ENCODE measurements at regions of chr6 and their contacts with region 1.

Region 1: GRCh38 chr6:89432875-89433251 is at the start of gene ANKRD6:
- DNase-seq: peak; percentile 91
- ATAC-seq: peak; percentile 98
- total RNA-seq, gene ANKRD6: 17.0 TPM

Region 2: GRCh38 chr6:89400912-89401399 is 31.9 kb before region 1 on chr6:
- intact Hi-C with region 1: no loop called
- DNase-seq: no peak
- ATAC-seq: no peak

Region 3: GRCh38 chr6:89483111-89483720 is 50.4 kb after region 1 on chr6:
- intact Hi-C with region 1: loop called (anchors 5 kb)
- DNase-seq: peak; percentile 45
- ATAC-seq: peak; percentile 86

Region 4: DNA sequence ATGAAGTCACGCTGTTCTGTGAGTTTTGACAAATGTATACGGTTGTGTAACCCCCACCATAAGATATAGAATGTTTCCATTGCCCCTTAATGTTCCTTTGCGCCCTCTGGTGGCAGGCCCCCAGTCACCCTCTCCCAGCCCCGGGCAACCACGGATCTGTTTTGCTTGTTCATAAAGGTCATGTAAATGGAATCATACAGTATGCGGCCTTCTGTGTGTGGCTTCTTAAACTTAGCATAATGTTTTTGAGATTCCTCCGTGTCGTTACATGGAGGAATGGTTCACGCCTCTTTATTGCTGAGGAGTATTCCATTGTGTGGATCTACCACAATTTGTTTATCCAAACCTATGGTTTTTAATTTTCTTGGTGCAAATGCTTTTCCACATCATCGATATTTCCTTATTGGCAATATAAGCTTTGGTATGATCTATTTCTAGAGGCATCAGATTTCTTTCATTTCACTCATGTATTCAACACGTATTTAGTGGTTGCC is 177.3 kb after region 1 on chr6:
- intact Hi-C with region 1: loop called (anchors 1 kb)
- DNase-seq: peak; percentile 91
- ATAC-seq: peak; percentile 68

Measured in Right ventricle myocardium inferior (tissue), 1 donor.